ENCODE measurements at regions of chr13 and their contacts with region 1.

Region 1: DNA sequence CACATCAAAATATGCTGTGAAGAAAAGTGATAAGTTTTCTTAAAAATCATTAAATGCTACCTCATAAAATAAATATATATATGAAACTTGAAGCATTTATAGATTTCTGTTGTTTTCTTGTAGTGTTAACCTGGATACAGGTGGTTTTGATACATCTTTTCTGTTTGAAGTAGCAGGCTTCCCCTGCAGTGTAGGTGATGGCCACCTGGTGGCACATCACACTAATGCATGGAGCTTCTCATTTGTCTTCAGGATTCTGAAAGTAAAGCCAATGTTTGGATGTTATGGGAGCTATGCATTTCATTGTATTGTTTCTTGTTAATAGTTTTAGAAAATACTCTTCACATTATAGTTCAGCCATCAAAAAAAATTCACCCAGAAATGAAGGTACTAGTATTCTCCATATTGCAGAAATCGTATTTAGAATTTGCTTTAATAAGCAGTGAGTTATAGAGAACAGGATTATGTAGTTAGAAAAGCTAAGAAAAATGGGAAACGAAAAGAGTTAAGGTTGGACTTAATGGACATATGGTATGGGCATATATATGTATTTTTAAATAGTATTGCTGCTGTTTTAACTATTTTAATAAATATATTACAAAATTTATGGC is 18.7 kb downstream of the GPR180 start:
- DNase-seq: no peak
- H3K4me3 ChIP-seq: no peak overlapping the region
- H3K27ac ChIP-seq: no peak overlapping the region
- H3K27me3 ChIP-seq: no peaks in the 10 kb centered on the region
- CTCF ChIP-seq: peak; percentile 85

Region 2: DNA sequence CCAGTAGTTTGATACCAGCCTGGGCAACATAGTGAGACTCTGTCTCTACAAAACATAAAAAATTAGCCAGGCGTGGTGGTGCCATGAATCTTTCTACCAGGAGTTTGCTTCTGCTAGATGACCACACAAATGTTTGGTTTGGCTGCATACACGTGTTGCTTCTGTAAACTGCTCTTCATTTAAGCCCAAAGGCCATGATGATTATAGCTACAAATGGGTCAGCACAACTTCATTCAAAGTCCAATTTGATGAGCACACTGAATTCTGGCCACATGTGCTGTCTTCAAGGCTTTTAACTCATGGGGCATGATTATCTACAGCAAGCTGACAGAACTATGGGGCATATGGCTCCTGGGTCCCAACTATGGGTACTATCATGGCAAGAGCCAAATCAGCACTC is 94.6 kb before region 1 on chr13:
- CTCF ChIA-PET with region 1: no interaction called
- POLR2A ChIA-PET with region 1: no interaction called
- DNase-seq: no peak
- H3K4me3 ChIP-seq: no peak overlapping the region
- H3K27ac ChIP-seq: no peak overlapping the region
- H3K27me3 ChIP-seq: no peaks in the 10 kb centered on the region
- CTCF ChIP-seq: no peak

Region 3: GRCh38 chr13:94549232-94550061 is 70.9 kb before region 1 on chr13:
- CTCF ChIA-PET with region 1: interaction called, 10 read pairs
- POLR2A ChIA-PET with region 1: no interaction called
- DNase-seq: peak; percentile 92
- H3K4me3 ChIP-seq: peak overlapping the region; percentile 87
- H3K27ac ChIP-seq: peak overlapping the region; percentile 97
- H3K27me3 ChIP-seq: no peaks in the 10 kb centered on the region
- CTCF ChIP-seq: no peak

Region 4: GRCh38 chr13:94608586-94608985 is 11.8 kb before region 1 on chr13:
- CTCF ChIA-PET with region 1: interaction called, 67 read pairs
- POLR2A ChIA-PET with region 1: no interaction called
- DNase-seq: no peak
- H3K4me3 ChIP-seq: no peak overlapping the region
- H3K27ac ChIP-seq: no peak overlapping the region
- H3K27me3 ChIP-seq: no peaks in the 10 kb centered on the region
- CTCF ChIP-seq: no peak

Region 5: DNA sequence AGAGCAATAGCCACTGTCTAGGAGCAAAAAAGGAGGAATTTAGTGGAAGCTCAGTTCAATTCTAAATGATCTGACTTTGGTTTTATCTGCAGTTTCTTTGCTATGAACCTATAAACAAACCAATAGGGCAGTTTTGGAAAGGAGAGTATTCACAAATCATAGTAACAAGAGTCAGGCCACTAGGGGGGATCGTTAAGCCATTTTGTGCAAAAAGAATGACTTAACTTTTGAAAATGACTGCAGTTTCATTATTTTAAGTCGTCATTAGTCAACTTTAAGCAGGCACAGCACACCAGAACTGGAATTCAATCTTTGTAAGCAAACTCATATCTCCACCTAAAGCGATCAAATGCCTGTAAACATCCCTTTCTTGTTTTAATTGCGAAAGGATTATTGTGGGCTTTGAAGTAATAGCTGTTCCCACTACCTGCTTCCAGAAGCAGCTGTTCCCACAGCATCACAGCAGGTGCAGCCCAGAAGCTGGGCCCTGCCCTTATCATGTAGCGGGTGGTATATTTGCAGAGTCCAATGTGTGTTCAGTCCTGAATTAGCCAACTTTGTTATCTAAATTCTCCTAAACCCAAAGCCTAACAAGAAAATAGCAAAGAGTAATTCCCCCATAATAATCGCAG is 40.4 kb after region 1 on chr13:
- CTCF ChIA-PET with region 1: interaction called, 15 read pairs
- POLR2A ChIA-PET with region 1: interaction called, 3 read pairs
- DNase-seq: no peak
- H3K4me3 ChIP-seq: no peak overlapping the region
- H3K27ac ChIP-seq: no peak overlapping the region
- H3K27me3 ChIP-seq: peaks cover 35% of the 10 kb centered on the region
- CTCF ChIP-seq: peak; percentile 57